ENCODE measurements at regions of chr6 and their contacts with region 1.

Region 1: DNA sequence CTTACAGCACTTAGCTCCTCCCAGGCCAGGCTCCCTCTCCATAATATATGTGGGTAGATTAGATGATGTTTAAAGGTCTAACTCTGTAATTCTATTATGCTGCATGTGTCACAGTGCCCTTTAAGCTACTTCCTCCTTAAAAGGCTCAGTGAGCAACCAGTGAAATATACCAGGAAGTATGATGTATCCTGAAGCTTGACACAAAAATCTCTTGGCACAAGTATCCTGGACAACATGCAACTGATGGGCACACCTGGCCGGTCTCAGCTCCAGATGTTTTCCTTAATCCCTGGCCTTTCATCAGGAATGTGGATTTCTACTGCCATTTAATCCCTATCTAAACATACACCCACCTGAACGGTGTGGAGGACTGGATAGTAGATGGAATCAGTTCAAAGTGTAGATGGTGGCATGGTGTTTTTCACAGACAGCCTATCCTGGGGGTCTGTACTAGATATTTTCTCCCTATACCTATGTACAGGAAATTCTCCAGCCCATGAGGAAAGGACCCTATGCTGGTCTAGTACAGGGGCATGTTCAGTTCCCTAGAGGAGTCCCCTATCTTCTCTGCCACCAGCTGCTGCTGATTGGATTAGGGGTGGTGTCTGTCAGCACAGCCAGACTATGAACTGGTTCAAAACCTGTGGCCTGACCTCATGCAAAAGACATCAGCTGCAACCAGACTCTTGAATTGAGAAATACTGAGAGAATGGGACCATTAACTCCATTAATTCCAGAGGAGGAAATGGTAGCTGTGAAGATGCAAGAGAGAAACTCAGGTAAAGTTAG is 59.4 kb upstream of the CITED2 start:
- DNase-seq: no peak
- ATAC-seq: no peak
- H3K4me3 ChIP-seq: no peak overlapping the region
- H3K27ac ChIP-seq: no peak overlapping the region
- H3K4me1 ChIP-seq: no peaks in the 10 kb centered on the region
- H3K27me3 ChIP-seq: no peaks in the 10 kb centered on the region
- CTCF ChIP-seq: no peak
- EP300 ChIP-seq: no peak
- POLR2A ChIP-seq: no peak
- RAD21 ChIP-seq: no peak

Region 2: GRCh38 chr6:138012682-138013081 is 1421.1 kb before region 1 on chr6:
- CTCF ChIA-PET with region 1: no interaction called
- POLR2A ChIA-PET with region 1: no interaction called
- RAD21 ChIA-PET with region 1: no interaction called
- SMC1A ChIA-PET with region 1: no interaction called
- in situ Hi-C with region 1: no loop called
- intact Hi-C with region 1: loop called (anchors 10 kb)
- DNase-seq: no peak
- ATAC-seq: no peak
- H3K4me3 ChIP-seq: no peak overlapping the region
- H3K27ac ChIP-seq: no peak overlapping the region
- H3K4me1 ChIP-seq: no peaks in the 10 kb centered on the region
- H3K27me3 ChIP-seq: no peaks in the 10 kb centered on the region
- CTCF ChIP-seq: no peak
- EP300 ChIP-seq: no peak
- POLR2A ChIP-seq: no peak
- RAD21 ChIP-seq: no peak

Region 3: GRCh38 chr6:139457476-139457875 is 23.7 kb after region 1 on chr6:
- CTCF ChIA-PET with region 1: no interaction called
- POLR2A ChIA-PET with region 1: no interaction called
- RAD21 ChIA-PET with region 1: no interaction called
- SMC1A ChIA-PET with region 1: no interaction called
- in situ Hi-C with region 1: no loop called
- intact Hi-C with region 1: no loop called
- DNase-seq: no peak
- ATAC-seq: no peak
- H3K4me3 ChIP-seq: no peak overlapping the region
- H3K27ac ChIP-seq: no peak overlapping the region
- H3K4me1 ChIP-seq: no peaks in the 10 kb centered on the region
- H3K27me3 ChIP-seq: no peaks in the 10 kb centered on the region; a peak in 1 of 4 replicates
- CTCF ChIP-seq: no peak
- EP300 ChIP-seq: no peak
- POLR2A ChIP-seq: no peak
- RAD21 ChIP-seq: no peak

Region 4: DNA sequence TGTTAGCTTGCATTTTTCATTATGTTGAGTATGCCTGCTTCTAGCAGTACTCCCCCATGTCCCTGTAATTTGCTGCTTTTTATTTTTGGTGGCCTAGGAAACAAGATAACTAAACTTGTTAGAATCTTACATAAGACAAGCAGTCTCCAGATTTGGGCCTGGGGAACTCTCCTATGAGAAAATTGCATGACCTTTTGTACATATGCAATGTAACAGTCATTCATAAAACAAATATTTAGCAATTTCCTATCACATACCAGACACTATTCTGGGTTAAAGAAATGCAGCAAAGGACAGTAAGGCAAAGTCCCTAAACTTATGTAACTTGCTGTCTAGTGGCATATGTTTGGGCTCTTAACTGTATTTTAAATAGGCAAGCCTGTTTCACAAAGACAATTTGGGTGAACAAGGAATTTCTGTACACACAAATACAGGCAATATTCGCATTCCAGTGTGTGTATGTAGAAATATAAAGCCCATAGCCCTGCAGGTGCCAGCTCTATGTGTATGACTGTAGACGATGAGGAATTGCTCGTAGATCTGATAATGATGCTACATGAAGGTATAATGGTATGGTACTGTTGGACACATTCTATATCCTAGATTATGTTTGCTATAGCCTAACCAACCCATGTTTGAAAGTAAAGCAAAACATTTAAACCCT is 245.8 kb after region 1 on chr6:
- CTCF ChIA-PET with region 1: no interaction called
- POLR2A ChIA-PET with region 1: no interaction called
- RAD21 ChIA-PET with region 1: no interaction called
- SMC1A ChIA-PET with region 1: no interaction called
- in situ Hi-C with region 1: no loop called
- intact Hi-C with region 1: no loop called
- DNase-seq: no peak
- ATAC-seq: no peak
- H3K4me3 ChIP-seq: no peak overlapping the region
- H3K27ac ChIP-seq: no peak overlapping the region
- H3K4me1 ChIP-seq: no peaks in the 10 kb centered on the region
- H3K27me3 ChIP-seq: no peaks in the 10 kb centered on the region
- CTCF ChIP-seq: no peak
- EP300 ChIP-seq: no peak
- POLR2A ChIP-seq: no peak
- RAD21 ChIP-seq: no peak